Ovary (tissue), 10 donors: ENCODE measurements at regions of chr5 and their contacts with region 1.

Region 1: DNA sequence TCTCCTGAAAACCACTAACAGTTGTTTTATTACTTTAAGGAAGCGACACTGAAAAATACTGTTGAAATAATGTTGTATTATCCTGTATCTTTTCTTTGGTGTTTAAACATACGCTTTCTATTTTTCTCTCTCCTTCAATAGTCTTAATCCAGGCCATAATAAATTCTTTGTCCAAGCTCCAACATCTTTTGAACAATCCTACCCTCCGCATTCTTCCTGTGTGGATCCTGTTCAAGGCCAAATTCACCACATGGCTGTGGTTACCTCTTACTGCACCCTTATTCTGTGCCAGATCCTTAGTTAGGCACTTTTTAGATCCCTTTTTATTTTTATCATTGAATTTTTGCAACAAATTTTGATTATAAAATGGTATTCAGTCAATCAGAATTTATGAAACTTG is 1691.5 kb downstream of the MAT2B start:
- DNase-seq: no peak
- H3K4me3 ChIP-seq: no peak overlapping the region
- H3K27ac ChIP-seq: no peak overlapping the region
- H3K4me1 ChIP-seq: no peaks in the 10 kb centered on the region
- H3K27me3 ChIP-seq: no peaks in the 10 kb centered on the region
- CTCF ChIP-seq: no peak
- EP300 ChIP-seq: no peak
- POLR2A ChIP-seq: no peak

Region 2: GRCh38 chr5:165035520-165035919 is 161.4 kb before region 1 on chr5:
- intact Hi-C with region 1: no loop called
- DNase-seq: no peak
- H3K4me3 ChIP-seq: no peak overlapping the region
- H3K27ac ChIP-seq: no peak overlapping the region
- H3K4me1 ChIP-seq: no peaks in the 10 kb centered on the region
- H3K27me3 ChIP-seq: no peaks in the 10 kb centered on the region
- CTCF ChIP-seq: no peak
- EP300 ChIP-seq: no peak
- POLR2A ChIP-seq: no peak

Region 3: GRCh38 chr5:165425594-165425993 is 228.6 kb after region 1 on chr5:
- intact Hi-C with region 1: loop called in 1 of 4 experiments (anchors 5 kb)
- DNase-seq: no peak
- H3K4me3 ChIP-seq: no peak overlapping the region
- H3K27ac ChIP-seq: no peak overlapping the region
- H3K4me1 ChIP-seq: no peaks in the 10 kb centered on the region
- H3K27me3 ChIP-seq: no peaks in the 10 kb centered on the region
- CTCF ChIP-seq: no peak
- EP300 ChIP-seq: no peak
- POLR2A ChIP-seq: no peak